Activated CD4-positive, alpha-beta T cell treated with anti-CD3 and anti-CD28 coated beads, Interleukin-2, amount 10 ng/mL, durations not matched to agents 24 days and 14 days (primary cell): ENCODE measurements at regions of chr6 and their contacts with region 1.

Region 1: GRCh38 chr6:2791124-2791974 is 26.2 kb downstream of the WRNIP1 start:
- DNase-seq: peak; percentile 89
- H3K4me3 Mint-ChIP-seq: peak overlapping the region; percentile 69
- H3K27ac Mint-ChIP-seq: peak overlapping the region; percentile 86
- H3K4me1 Mint-ChIP-seq: peaks cover 35% of the 10 kb centered on the region
- H3K27me3 Mint-ChIP-seq: no peaks in the 10 kb centered on the region

Region 2: DNA sequence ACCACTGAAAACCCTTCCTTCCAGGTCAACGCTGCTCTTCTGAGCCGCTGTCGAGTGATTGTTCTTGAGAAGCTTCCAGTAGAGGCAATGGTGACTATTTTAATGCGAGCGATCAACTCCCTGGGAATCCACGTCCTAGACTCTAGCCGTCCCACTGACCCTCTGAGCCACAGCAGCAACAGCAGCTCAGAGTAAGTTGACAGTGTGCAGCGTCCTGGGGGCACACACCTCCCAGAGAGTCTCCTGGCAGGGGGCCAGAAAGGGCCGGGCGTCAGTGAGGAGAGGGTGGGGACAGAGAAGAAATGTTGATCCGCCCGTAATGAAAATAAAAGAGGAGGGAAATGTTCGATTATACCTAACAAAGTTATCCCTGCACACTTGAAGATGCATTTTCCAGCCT is 21.2 kb before region 1 on chr6:
- intact Hi-C with region 1: no loop called
- DNase-seq: no peak
- H3K4me3 Mint-ChIP-seq: no peak overlapping the region
- H3K27ac Mint-ChIP-seq: no peak overlapping the region
- H3K4me1 Mint-ChIP-seq: peaks cover 52% of the 10 kb centered on the region
- H3K27me3 Mint-ChIP-seq: no peaks in the 10 kb centered on the region

Region 3: DNA sequence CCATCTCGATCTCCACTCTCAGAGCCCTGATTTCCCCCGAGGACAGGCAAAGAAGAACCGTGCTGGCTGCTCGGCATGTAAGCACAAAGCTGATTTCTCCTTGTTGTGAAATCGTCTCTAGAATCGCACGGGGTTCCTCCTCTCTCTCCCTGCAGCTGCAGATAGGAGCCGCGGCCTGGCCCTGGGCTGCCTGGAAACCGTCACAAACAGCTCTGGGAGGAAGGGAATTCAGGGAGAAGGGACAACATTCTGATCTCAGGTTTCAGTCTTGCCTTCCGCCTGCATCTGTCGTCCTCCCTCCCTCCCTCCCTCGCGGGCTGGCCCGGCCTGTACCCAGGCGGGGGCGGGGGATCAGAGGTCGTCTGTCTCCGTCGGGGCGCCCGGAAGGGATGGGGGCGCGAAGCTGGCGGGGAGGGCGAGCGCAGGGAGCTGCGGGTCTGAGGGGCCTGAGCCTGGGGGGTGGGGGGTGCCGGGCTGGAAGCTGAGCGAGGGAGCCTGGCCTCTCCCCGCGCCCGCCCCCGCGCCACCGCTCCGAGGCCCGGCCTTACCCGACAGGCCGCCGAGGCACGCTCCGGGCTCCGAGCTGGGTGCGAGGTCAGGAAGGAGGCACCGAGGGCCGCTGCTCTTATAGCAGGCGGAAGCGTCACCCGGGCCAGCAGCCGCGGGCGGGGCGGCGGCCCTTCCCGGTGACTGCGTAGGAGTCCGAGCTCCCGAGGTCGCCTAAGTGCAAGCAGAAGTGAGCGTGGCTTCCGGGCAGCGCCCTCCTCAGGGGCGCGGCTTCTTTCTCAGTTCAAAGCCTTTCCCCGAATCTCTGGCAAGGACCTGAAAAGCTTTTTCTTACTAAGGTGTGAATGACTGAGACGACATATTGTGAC is 50.2 kb after region 1 on chr6 and contains the start of gene SERPINB1:
- intact Hi-C with region 1: loop called (anchors 1 kb)
- DNase-seq: peak; percentile 94
- H3K4me3 Mint-ChIP-seq: peak within 1 kb of the TSS; percentile 91
- H3K27ac Mint-ChIP-seq: peak within 1 kb of the TSS; percentile 88
- H3K4me1 Mint-ChIP-seq: peaks cover 57% of the 10 kb centered on the region
- H3K27me3 Mint-ChIP-seq: no peaks in the 10 kb centered on the region
- total RNA-seq, gene SERPINB1: 76.1 and 79.9 TPM in 2 replicates

Region 4: GRCh38 chr6:2846873-2847224 is 55.5 kb after region 1 on chr6:
- intact Hi-C with region 1: loop called (anchors 1 kb)
- DNase-seq: no peak
- H3K4me3 Mint-ChIP-seq: peak overlapping the region; percentile 4
- H3K27ac Mint-ChIP-seq: peak overlapping the region; percentile 6
- H3K4me1 Mint-ChIP-seq: peaks cover 48% of the 10 kb centered on the region
- H3K27me3 Mint-ChIP-seq: no peaks in the 10 kb centered on the region

Region 5: DNA sequence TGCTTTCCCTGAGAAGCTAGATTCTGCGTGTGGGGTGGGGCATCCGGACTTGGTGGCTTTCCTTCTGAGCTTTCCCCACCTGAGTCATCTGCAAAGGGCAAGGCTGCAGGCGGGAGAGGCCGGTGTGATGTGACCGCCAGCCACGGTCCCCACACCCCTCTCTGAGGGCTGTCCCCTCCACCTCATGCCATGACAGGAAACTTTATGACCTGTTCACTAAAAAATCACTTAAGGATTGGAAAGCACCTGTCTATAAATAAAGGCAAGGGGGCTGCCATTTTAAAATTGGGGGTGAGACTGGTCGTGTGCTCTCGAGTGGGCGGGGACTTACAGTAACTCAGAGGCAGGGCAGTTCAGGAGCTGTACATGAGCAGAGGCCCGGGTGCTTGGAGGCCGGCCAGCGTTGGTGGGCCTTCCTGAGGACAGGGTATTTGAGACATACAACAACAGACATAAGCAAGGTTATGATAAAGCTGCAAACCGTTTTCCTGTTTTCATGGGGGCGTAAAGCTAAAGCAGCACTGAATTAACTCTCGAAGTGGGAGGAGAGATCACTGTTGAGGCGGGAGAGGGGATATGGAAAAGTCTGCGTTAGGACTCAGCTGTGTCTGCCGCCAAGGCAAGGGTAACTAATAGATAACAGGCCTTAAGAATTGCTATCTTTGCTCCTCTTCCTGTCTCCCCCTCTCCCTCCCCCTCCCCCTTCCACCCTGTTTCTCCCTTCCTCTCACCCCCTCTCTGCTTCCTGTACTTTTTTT is 66.4 kb after region 1 on chr6:
- intact Hi-C with region 1: no loop called
- DNase-seq: peak; percentile 93
- H3K4me3 Mint-ChIP-seq: peak overlapping the region; percentile 84
- H3K27ac Mint-ChIP-seq: peak overlapping the region; percentile 98
- H3K4me1 Mint-ChIP-seq: peaks cover 84% of the 10 kb centered on the region
- H3K27me3 Mint-ChIP-seq: no peaks in the 10 kb centered on the region

Region 6: GRCh38 chr6:2911171-2911570 is 119.8 kb after region 1 on chr6:
- intact Hi-C with region 1: loop called (anchors 1 kb)
- DNase-seq: peak; percentile 52
- H3K4me3 Mint-ChIP-seq: no peak overlapping the region
- H3K27ac Mint-ChIP-seq: no peak overlapping the region
- H3K4me1 Mint-ChIP-seq: peaks cover 35% of the 10 kb centered on the region
- H3K27me3 Mint-ChIP-seq: peaks cover 1% of the 10 kb centered on the region

Region 7: GRCh38 chr6:2988426-2989331 is 197.3 kb after region 1 on chr6:
- intact Hi-C with region 1: loop called (anchors 1 kb)
- DNase-seq: peak; percentile 93
- H3K4me3 Mint-ChIP-seq: peak overlapping the region; percentile 89
- H3K27ac Mint-ChIP-seq: peak overlapping the region; percentile 99
- H3K4me1 Mint-ChIP-seq: peaks cover 22% of the 10 kb centered on the region
- H3K27me3 Mint-ChIP-seq: peaks cover 3% of the 10 kb centered on the region

Region 8: GRCh38 chr6:3023663-3024483 is 232.5 kb after region 1 on chr6:
- intact Hi-C with region 1: no loop called
- DNase-seq: peak; percentile 96
- H3K4me3 Mint-ChIP-seq: peak overlapping the region; percentile 94
- H3K27ac Mint-ChIP-seq: peak overlapping the region; percentile 97
- H3K4me1 Mint-ChIP-seq: peaks cover 60% of the 10 kb centered on the region
- H3K27me3 Mint-ChIP-seq: no peaks in the 10 kb centered on the region

Region 9: GRCh38 chr6:3052481-3053230 is 261.3 kb after region 1 on chr6:
- intact Hi-C with region 1: loop called (anchors 2 kb)
- DNase-seq: no peak
- H3K4me3 Mint-ChIP-seq: peak overlapping the region; percentile 82
- H3K27ac Mint-ChIP-seq: peak overlapping the region; percentile 68
- H3K4me1 Mint-ChIP-seq: peaks cover 28% of the 10 kb centered on the region
- H3K27me3 Mint-ChIP-seq: peaks cover 10% of the 10 kb centered on the region